PC-3 (cell line): ENCODE measurements at regions of chr7 and their contacts with region 1.

Region 1: GRCh38 chr7:133853706-133854276 is 273.3 kb upstream of the LRGUK start:
- DNase-seq: peak; percentile 92
- ATAC-seq: peak; percentile 91
- H3K4me3 ChIP-seq: no peak overlapping the region
- H3K27ac ChIP-seq: peak overlapping the region; percentile 74
- H3K4me1 ChIP-seq: peaks cover 17% of the 10 kb centered on the region
- H3K27me3 ChIP-seq: no peaks in the 10 kb centered on the region
- CTCF ChIP-seq: peak; percentile 83

Region 2: GRCh38 chr7:133512560-133512959 is 341.2 kb before region 1 on chr7:
- CTCF ChIA-PET with region 1: no interaction called
- POLR2A ChIA-PET with region 1: no interaction called
- intact Hi-C with region 1: loop called (anchors 5 kb)
- DNase-seq: peak; percentile 94
- ATAC-seq: peak; percentile 98
- H3K4me3 ChIP-seq: peak overlapping the region; percentile 61
- H3K27ac ChIP-seq: peak overlapping the region; percentile 69
- H3K4me1 ChIP-seq: peaks cover 22% of the 10 kb centered on the region
- H3K27me3 ChIP-seq: no peaks in the 10 kb centered on the region
- CTCF ChIP-seq: no peak

Region 3: DNA sequence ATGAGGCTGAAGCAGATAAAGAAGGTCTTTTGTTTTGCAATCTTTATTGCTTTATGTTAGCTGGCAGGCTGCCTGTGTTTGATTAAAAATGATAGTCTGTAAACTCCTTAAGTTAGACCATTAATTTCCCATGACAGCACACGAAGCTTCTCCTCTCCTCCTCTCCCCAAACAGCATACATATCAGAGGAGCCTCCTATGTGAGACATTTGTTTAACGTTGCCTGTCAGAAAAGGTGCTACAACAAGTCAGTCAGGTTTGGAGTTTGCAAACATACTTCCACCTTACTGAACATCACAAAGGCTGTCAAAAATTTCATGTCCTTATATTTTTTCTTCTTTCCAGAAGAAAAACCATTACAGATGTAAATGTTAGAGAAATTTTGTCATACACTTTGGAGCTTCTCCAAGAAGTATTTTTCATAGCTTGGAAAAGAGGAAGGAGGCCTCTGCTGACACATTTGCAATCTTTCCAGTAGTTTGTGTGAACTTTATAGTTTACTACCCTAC is 207.9 kb before region 1 on chr7:
- CTCF ChIA-PET with region 1: no interaction called
- POLR2A ChIA-PET with region 1: no interaction called
- intact Hi-C with region 1: loop called (anchors 5 kb)
- DNase-seq: peak; percentile 17
- ATAC-seq: peak; percentile 53
- H3K4me3 ChIP-seq: no peak overlapping the region
- H3K27ac ChIP-seq: no peak overlapping the region
- H3K4me1 ChIP-seq: peaks cover 3% of the 10 kb centered on the region; the same call in 1 of the 2 replicates
- H3K27me3 ChIP-seq: no peaks in the 10 kb centered on the region
- CTCF ChIP-seq: no peak

Region 4: DNA sequence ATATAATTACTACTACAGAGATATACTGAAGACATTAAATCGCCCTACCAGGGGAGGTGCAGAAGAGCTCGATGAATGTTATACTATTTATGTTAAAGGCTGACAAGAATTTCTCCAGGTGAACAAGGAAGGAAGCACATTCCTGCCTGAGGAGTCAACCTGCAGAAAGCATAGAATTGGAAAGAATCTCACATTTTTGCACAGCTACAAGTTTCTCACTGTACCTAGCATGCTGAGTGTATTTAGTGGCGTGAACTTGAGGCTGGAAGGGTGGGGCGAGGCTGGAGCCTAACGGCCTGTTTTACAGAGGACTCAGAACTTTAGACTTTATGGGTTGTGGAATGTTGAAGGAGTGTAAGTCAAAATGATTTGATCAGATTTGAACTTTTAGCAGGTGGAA is 100.3 kb before region 1 on chr7:
- CTCF ChIA-PET with region 1: interaction called, 3 read pairs
- POLR2A ChIA-PET with region 1: interaction called, 5 read pairs
- intact Hi-C with region 1: loop called (anchors 2 kb)
- DNase-seq: peak; percentile 74
- ATAC-seq: peak; percentile 91
- H3K4me3 ChIP-seq: no peak overlapping the region
- H3K27ac ChIP-seq: peak overlapping the region; percentile 45
- H3K4me1 ChIP-seq: peaks cover 20% of the 10 kb centered on the region
- H3K27me3 ChIP-seq: no peaks in the 10 kb centered on the region
- CTCF ChIP-seq: no peak

Region 5: GRCh38 chr7:133778472-133778871 is 75.3 kb before region 1 on chr7:
- CTCF ChIA-PET with region 1: no interaction called
- POLR2A ChIA-PET with region 1: no interaction called
- intact Hi-C with region 1: no loop called
- DNase-seq: no peak
- ATAC-seq: no peak
- H3K4me3 ChIP-seq: no peak overlapping the region
- H3K27ac ChIP-seq: no peak overlapping the region
- H3K4me1 ChIP-seq: peaks cover 1% of the 10 kb centered on the region
- H3K27me3 ChIP-seq: no peaks in the 10 kb centered on the region
- CTCF ChIP-seq: no peak

Region 6: DNA sequence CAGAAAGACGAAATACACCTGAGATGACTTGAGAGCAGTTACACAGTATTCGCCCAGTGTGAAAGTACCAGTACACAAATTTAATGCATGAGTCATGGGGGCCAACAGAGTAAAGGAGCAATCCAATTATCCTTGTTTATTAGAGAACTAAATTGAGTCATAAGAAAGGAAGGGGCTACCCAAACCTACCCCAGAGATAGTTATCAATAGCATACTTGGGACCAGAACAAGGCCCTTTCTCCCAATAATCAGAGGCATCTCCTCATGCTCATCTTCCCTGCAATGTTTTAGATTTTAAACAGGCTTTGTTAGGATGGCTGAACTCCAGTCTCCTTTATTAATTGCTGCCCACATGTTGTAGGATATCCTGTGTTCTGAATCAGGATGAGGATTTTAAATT is 33.7 kb after region 1 on chr7:
- CTCF ChIA-PET with region 1: no interaction called
- POLR2A ChIA-PET with region 1: no interaction called
- intact Hi-C with region 1: no loop called
- DNase-seq: peak; percentile 4
- ATAC-seq: peak; percentile 72
- H3K4me3 ChIP-seq: no peak overlapping the region
- H3K27ac ChIP-seq: no peak overlapping the region
- H3K4me1 ChIP-seq: no peaks in the 10 kb centered on the region
- H3K27me3 ChIP-seq: no peaks in the 10 kb centered on the region
- CTCF ChIP-seq: no peak

Region 7: GRCh38 chr7:133912916-133913697 is 59.3 kb after region 1 on chr7:
- CTCF ChIA-PET with region 1: no interaction called
- POLR2A ChIA-PET with region 1: no interaction called
- intact Hi-C with region 1: no loop called
- DNase-seq: peak; percentile 81
- ATAC-seq: peak; percentile 93
- H3K4me3 ChIP-seq: no peak overlapping the region
- H3K27ac ChIP-seq: peak overlapping the region; percentile 35; the same call in 1 of the 2 replicates
- H3K4me1 ChIP-seq: peaks cover 14% of the 10 kb centered on the region
- H3K27me3 ChIP-seq: no peaks in the 10 kb centered on the region
- CTCF ChIP-seq: no peak

Region 8: DNA sequence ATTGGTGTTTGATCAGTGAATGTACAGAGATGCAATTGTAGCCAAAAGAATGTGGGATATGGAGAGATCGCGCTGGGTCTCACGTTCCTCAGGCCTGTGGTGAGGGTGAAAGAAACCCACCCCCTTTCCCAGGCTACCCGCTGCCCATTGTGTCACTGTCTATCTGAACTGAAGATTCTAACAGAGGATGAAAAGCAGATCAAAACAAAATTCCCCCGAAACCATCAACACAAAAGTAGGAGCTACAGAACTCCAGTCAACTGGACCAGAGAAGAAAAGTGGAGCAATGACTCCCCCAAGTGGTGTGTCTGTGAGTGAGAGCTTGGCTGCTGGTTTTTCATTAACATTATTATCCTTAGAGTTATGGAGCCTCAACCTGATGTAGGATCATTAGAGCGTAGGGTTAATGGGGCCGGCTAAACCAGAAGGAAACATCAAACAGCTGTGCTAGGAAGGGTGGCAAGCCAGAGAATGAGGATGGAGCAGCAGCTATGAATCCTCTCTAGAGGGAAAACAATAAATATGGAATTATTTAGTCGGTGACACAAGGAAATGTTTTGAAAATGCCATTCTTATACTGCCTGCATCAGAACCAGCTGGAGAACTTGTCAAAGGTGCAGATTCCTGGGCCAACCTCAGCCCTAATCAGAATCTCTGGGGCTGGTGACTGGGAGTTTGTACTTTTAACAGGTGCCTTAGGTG is 566.8 kb after region 1 on chr7:
- CTCF ChIA-PET with region 1: interaction called, 4 read pairs
- POLR2A ChIA-PET with region 1: no interaction called
- intact Hi-C with region 1: loop called (anchors 10 kb)
- DNase-seq: peak; percentile 79
- ATAC-seq: peak; percentile 84
- H3K4me3 ChIP-seq: no peak overlapping the region
- H3K27ac ChIP-seq: peak overlapping the region; percentile 18; the same call in 1 of the 2 replicates
- H3K4me1 ChIP-seq: peaks cover 32% of the 10 kb centered on the region
- H3K27me3 ChIP-seq: no peaks in the 10 kb centered on the region
- CTCF ChIP-seq: peak; percentile 90